B cell (primary cell): ENCODE measurements at regions of chr10 and their contacts with region 1.

Region 1: GRCh38 chr10:71771821-71772617 is 1.3 kb downstream of the VSIR start:
- DNase-seq: peak; percentile 27
- ATAC-seq: no peak
- H3K4me3 ChIP-seq: peak overlapping the region; percentile 82 to 97 (median 90)
- H3K4me3 Mint-ChIP-seq: peak overlapping the region; percentile 94
- H3K27ac ChIP-seq: peak overlapping the region; percentile 88 to 95
- H3K27ac Mint-ChIP-seq: peak overlapping the region; percentile 92
- H3K4me1 ChIP-seq: peaks cover 90 to 98% of the 10 kb centered on the region in 2 donors
- H3K4me1 Mint-ChIP-seq: peaks cover 93% of the 10 kb centered on the region
- H3K27me3 ChIP-seq: no peaks in the 10 kb centered on the region
- H3K27me3 Mint-ChIP-seq: no peaks in the 10 kb centered on the region
- CTCF ChIP-seq: no peak

Region 2: GRCh38 chr10:71378336-71379117 is 393.5 kb before region 1 on chr10:
- CTCF ChIA-PET with region 1: no interaction called
- POLR2A ChIA-PET with region 1: interaction called, 5 read pairs
- intact Hi-C with region 1: loop called (anchors 5 kb)
- DNase-seq: peak; percentile 70
- ATAC-seq: no peak
- H3K4me3 ChIP-seq: peak overlapping the region in 1 of 5 experiments; percentile 22
- H3K4me3 Mint-ChIP-seq: peak overlapping the region; percentile 65
- H3K27ac ChIP-seq: peak overlapping the region; percentile 11 to 48
- H3K27ac Mint-ChIP-seq: peak overlapping the region; percentile 84
- H3K4me1 ChIP-seq: peaks cover 31 to 47% of the 10 kb centered on the region in 2 donors
- H3K4me1 Mint-ChIP-seq: peaks cover 37% of the 10 kb centered on the region
- H3K27me3 ChIP-seq: no peaks in the 10 kb centered on the region
- H3K27me3 Mint-ChIP-seq: no peaks in the 10 kb centered on the region
- CTCF ChIP-seq: no peak

Region 3: DNA sequence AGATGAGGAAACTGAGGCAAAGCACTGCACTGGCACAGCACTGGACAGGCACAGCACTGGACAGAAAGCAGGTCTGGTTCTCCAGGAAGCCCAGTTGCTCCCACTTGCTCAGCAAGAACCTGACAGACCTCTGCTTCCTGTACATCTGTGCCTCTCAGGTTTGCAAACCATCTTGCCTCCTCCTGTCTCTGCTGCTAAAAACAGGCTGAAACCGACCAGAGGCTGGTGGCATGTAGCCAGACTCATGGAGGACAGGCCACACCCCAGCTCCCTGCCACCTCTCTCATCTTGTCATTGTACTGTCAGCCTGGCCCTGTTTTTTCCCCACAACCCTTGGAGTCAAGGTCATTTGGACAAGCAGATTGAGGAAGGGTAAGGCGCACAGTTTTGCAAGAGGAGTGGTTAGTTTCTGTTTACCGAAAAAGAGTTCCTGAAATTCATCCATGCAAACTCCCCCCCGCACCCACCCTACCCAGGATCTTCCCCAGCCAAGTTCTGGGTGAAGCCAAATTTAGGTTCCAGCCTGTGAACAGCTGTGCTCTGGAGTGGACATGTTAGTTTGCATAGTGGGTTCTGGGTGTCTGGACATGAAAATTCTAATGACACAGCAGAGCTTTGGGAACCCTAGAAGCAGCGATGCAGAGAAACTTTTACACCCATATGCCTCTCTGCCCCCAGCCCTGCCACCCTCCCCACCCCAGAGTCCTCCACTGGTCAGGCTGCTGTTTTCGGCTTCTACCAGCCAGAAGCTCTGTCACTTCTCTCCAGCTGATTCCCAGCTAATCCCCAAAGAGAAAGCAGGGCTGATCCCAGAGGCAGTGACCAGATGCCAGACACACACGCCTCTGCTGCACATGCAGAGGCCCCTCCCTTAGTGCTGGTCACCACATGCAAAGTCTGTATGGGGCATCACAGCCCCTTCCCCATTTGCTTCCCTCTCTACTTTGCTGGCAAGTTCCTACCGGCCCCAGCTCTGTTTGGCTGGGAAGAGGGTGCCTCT is 44.0 kb before region 1 on chr10:
- CTCF ChIA-PET with region 1: interaction called, 36 read pairs
- POLR2A ChIA-PET with region 1: interaction called, 15 read pairs
- intact Hi-C with region 1: loop called (anchors 1 kb)
- DNase-seq: peak; percentile 74
- ATAC-seq: peak; percentile 67
- H3K4me3 ChIP-seq: peak overlapping the region in 4 of 5 experiments; percentile 2 to 36 (median 18)
- H3K4me3 Mint-ChIP-seq: peak overlapping the region; percentile 83
- H3K27ac ChIP-seq: peak overlapping the region; percentile 75 to 78
- H3K27ac Mint-ChIP-seq: peak overlapping the region; percentile 92
- H3K4me1 ChIP-seq: peaks cover 40 to 69% of the 10 kb centered on the region in 2 donors
- H3K4me1 Mint-ChIP-seq: peaks cover 55% of the 10 kb centered on the region
- H3K27me3 ChIP-seq: no peaks in the 10 kb centered on the region
- H3K27me3 Mint-ChIP-seq: no peaks in the 10 kb centered on the region
- CTCF ChIP-seq: no peak

Region 4: GRCh38 chr10:71756311-71757191 is 15.5 kb before region 1 on chr10:
- CTCF ChIA-PET with region 1: interaction called, 15 read pairs
- POLR2A ChIA-PET with region 1: interaction called, 15 read pairs
- intact Hi-C with region 1: no loop called
- DNase-seq: no peak
- ATAC-seq: no peak
- H3K4me3 ChIP-seq: no peak overlapping the region
- H3K4me3 Mint-ChIP-seq: peak overlapping the region; percentile 41
- H3K27ac ChIP-seq: peak overlapping the region; percentile 17 to 23
- H3K27ac Mint-ChIP-seq: peak overlapping the region; percentile 83
- H3K4me1 ChIP-seq: peaks cover 61 to 66% of the 10 kb centered on the region in 2 donors
- H3K4me1 Mint-ChIP-seq: peaks cover 64% of the 10 kb centered on the region
- H3K27me3 ChIP-seq: no peaks in the 10 kb centered on the region
- H3K27me3 Mint-ChIP-seq: no peaks in the 10 kb centered on the region
- CTCF ChIP-seq: no peak

Region 5: GRCh38 chr10:71793225-71793624 is 21.2 kb after region 1 on chr10:
- CTCF ChIA-PET with region 1: no interaction called
- POLR2A ChIA-PET with region 1: no interaction called
- intact Hi-C with region 1: no loop called
- DNase-seq: no peak
- ATAC-seq: no peak
- H3K4me3 ChIP-seq: no peak overlapping the region
- H3K4me3 Mint-ChIP-seq: no peak overlapping the region
- H3K27ac ChIP-seq: no peak overlapping the region
- H3K27ac Mint-ChIP-seq: no peak overlapping the region
- H3K4me1 ChIP-seq: peaks cover 25 to 31% of the 10 kb centered on the region in 2 donors
- H3K4me1 Mint-ChIP-seq: peaks cover 27% of the 10 kb centered on the region
- H3K27me3 ChIP-seq: peaks cover 0 to 5% (median 2%) of the 10 kb centered on the region in 4 experiments
- H3K27me3 Mint-ChIP-seq: peaks cover 6% of the 10 kb centered on the region
- CTCF ChIP-seq: no peak

Region 6: DNA sequence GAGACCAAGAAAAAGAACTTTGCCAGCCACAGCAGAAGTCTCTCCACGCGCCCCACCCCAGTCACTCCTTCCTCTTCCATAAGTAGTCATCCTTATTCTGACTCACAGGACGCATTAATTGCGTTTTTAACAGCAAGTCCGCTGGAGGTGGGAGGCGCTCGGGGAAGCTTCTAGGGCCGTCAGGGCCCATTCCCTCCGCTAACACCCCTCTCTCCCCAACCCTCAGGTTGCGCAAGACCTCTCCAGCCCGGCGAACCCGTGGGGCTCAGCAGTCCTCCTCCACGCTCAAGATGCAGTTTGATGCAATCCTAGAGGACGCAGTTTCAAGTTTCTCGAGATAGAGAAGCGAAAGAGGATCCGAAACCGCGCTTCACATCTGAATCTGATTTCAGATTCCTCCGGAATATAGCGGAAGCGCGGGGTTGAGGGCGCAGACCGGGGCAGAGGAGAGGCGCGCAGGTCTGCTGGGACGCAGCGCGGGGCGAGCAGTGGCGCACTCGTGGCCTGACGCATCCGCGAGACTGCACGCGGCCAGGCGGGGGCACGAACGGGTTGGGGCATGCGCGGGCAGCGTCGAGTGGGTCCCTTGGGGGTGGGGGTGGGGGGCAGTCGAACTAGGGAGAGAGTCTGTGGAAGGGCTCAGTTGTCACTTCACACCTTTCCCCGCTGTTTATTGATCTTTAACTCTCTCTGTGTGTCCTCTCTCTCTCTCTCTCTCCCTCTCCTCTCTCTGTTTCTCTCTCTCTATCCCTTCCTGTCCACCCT is 116.8 kb after region 1 on chr10:
- CTCF ChIA-PET with region 1: interaction called, 6 read pairs
- POLR2A ChIA-PET with region 1: no interaction called
- intact Hi-C with region 1: loop called (anchors 2 kb)
- DNase-seq: peak; percentile 96
- ATAC-seq: peak; percentile 95
- H3K4me3 ChIP-seq: peak overlapping the region; percentile 36 to 66 (median 54)
- H3K4me3 Mint-ChIP-seq: peak overlapping the region; percentile 87
- H3K27ac ChIP-seq: peak overlapping the region; percentile 71 to 77
- H3K27ac Mint-ChIP-seq: peak overlapping the region; percentile 92
- H3K4me1 ChIP-seq: peaks cover 33 to 40% of the 10 kb centered on the region in 2 donors
- H3K4me1 Mint-ChIP-seq: peaks cover 36% of the 10 kb centered on the region
- H3K27me3 ChIP-seq: no peaks in the 10 kb centered on the region
- H3K27me3 Mint-ChIP-seq: no peaks in the 10 kb centered on the region
- CTCF ChIP-seq: peak; percentile 16

Region 7: GRCh38 chr10:72319416-72320254 is 547.6 kb after region 1 on chr10:
- CTCF ChIA-PET with region 1: no interaction called
- POLR2A ChIA-PET with region 1: no interaction called
- intact Hi-C with region 1: no loop called
- DNase-seq: peak; percentile 92
- ATAC-seq: peak; percentile 65
- H3K4me3 ChIP-seq: peak overlapping the region in 4 of 5 experiments; percentile 49 to 68 (median 58)
- H3K4me3 Mint-ChIP-seq: peak overlapping the region; percentile 88
- H3K27ac ChIP-seq: peak overlapping the region; percentile 94 to 95
- H3K27ac Mint-ChIP-seq: peak overlapping the region; percentile 99
- H3K4me1 ChIP-seq: peaks cover 78 to 91% of the 10 kb centered on the region in 2 donors
- H3K4me1 Mint-ChIP-seq: peaks cover 78% of the 10 kb centered on the region
- H3K27me3 ChIP-seq: no peaks in the 10 kb centered on the region
- H3K27me3 Mint-ChIP-seq: no peaks in the 10 kb centered on the region
- CTCF ChIP-seq: no peak